CD8-positive, alpha-beta T cell (primary cell): ENCODE measurements at regions of chr7 and their contacts with region 1.

Region 1: DNA sequence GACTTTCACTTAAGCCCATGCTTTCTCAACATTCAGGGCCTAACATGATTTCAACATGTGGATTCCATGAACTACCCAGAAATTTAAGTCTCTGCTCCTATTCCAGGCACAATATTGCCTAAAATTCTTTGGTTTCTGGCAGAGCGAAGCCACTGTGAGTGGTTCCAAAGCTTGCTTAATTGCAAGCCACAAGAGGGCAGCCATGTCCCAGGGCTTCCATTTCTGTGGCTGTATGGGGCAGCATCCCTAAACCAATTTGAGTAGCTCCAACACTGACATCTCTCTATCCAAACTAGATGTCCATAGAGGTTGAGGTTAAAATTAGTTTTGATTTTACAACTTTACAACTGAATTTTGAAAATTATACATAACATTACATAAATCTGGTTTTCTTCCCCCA is 56.3 kb upstream of the MDFIC start:
- DNase-seq: peak; percentile 18 to 71 (median 53)
- ATAC-seq: peak; percentile 64
- H3K4me3 ChIP-seq: no peak overlapping the region
- H3K4me3 Mint-ChIP-seq: no peak overlapping the region
- H3K27ac ChIP-seq: no peak overlapping the region
- H3K27ac Mint-ChIP-seq: no peak overlapping the region
- H3K4me1 ChIP-seq: no peaks in the 10 kb centered on the region
- H3K4me1 Mint-ChIP-seq: no peaks in the 10 kb centered on the region
- H3K27me3 ChIP-seq: no peaks in the 10 kb centered on the region
- H3K27me3 Mint-ChIP-seq: no peaks in the 10 kb centered on the region
- CTCF ChIP-seq: peak; percentile 63

Region 2: GRCh38 chr7:113636727-113637421 is 1228.7 kb before region 1 on chr7:
- CTCF ChIA-PET with region 1: no interaction called
- POLR2A ChIA-PET with region 1: no interaction called
- intact Hi-C with region 1: no loop called
- DNase-seq: no peak
- ATAC-seq: no peak
- H3K4me3 ChIP-seq: no peak overlapping the region
- H3K4me3 Mint-ChIP-seq: no peak overlapping the region
- H3K27ac ChIP-seq: no peak overlapping the region
- H3K27ac Mint-ChIP-seq: no peak overlapping the region
- H3K4me1 ChIP-seq: no peaks in the 10 kb centered on the region
- H3K4me1 Mint-ChIP-seq: no peaks in the 10 kb centered on the region
- H3K27me3 ChIP-seq: no peaks in the 10 kb centered on the region
- H3K27me3 Mint-ChIP-seq: no peaks in the 10 kb centered on the region
- CTCF ChIP-seq: no peak

Region 3: DNA sequence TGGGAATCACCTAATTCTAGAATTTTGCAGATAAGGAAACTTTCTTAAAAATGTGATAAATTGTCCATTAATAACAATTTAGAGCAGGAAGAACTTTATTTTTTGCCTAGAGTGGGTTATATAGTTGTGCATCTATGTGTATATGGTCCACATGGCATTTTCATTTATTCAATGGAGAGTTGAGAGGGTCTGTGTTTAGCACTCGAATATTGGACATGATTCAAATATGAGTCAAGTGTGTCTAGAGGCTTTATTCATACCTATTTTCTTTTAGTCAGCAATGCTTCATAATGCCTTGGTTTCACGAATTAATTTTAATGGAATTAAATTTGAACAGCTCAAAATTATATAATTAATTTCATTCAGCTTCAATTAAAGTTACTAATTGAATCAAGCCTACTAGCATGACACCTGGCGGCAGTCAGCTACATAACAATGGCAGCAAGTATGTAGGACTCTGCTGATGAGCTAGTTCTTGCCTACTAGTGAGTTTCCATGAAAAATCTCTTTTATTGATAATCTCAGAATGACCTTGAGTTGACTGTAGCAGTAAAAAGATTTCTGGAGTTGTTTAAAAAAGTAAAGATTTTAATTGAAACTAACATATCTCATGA is 74.0 kb after region 1 on chr7:
- CTCF ChIA-PET with region 1: interaction called, 19 read pairs
- POLR2A ChIA-PET with region 1: no interaction called
- intact Hi-C with region 1: loop called (anchors 1 to 5 kb)
- DNase-seq: peak in 4 of 9 experiments; percentile 10 to 52 (median 31)
- ATAC-seq: peak; percentile 42
- H3K4me3 ChIP-seq: no peak overlapping the region
- H3K4me3 Mint-ChIP-seq: no peak overlapping the region
- H3K27ac ChIP-seq: no peak overlapping the region
- H3K27ac Mint-ChIP-seq: no peak overlapping the region
- H3K4me1 ChIP-seq: peaks cover 11% of the 10 kb centered on the region
- H3K4me1 Mint-ChIP-seq: peaks cover 60% of the 10 kb centered on the region
- H3K27me3 ChIP-seq: no peaks in the 10 kb centered on the region
- H3K27me3 Mint-ChIP-seq: no peaks in the 10 kb centered on the region
- CTCF ChIP-seq: no peak

Region 4: GRCh38 chr7:115217373-115217772 is 351.8 kb after region 1 on chr7:
- CTCF ChIA-PET with region 1: interaction called, 32 read pairs
- POLR2A ChIA-PET with region 1: interaction called, 3 read pairs
- intact Hi-C with region 1: loop called (anchors 1 to 2 kb)
- DNase-seq: peak in 1 of 9 experiments; percentile 17
- ATAC-seq: no peak
- H3K4me3 ChIP-seq: no peak overlapping the region
- H3K4me3 Mint-ChIP-seq: no peak overlapping the region
- H3K27ac ChIP-seq: no peak overlapping the region
- H3K27ac Mint-ChIP-seq: no peak overlapping the region
- H3K4me1 ChIP-seq: no peaks in the 10 kb centered on the region
- H3K4me1 Mint-ChIP-seq: peaks cover 4% of the 10 kb centered on the region
- H3K27me3 ChIP-seq: no peaks in the 10 kb centered on the region
- H3K27me3 Mint-ChIP-seq: no peaks in the 10 kb centered on the region
- CTCF ChIP-seq: peak; percentile 27

Region 5: DNA sequence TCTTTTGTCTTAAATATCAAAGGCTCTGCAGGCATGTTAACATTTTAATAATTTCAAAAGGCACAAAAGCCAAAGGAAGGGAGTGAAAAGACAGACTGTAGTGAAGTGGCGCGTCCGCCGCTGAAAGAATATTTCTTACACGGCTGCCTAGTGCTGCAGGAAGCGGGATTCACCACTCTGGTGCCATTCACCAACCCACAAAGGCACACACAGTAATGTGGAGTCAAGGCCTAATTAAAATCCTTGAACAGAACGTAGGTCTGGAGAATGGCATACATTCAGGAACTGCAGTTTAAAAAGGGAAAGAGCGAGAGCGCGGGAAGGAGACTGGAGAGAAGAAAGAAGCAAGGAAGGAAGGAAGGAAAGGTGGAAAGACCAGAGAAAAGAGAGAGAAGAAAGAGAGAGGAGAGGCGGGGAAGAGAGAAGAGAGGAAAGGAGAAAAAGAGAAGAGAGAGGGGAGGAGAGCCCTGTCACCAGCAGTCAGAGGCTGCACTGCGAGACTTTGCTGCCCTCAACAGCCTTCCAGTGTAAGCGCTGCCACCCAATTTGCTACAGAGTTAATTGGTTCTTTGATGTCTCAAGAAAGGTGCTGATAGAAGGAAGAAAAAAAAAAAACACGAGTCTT is 610.3 kb after region 1 on chr7:
- CTCF ChIA-PET with region 1: no interaction called
- POLR2A ChIA-PET with region 1: no interaction called
- intact Hi-C with region 1: loop called in 1 of 2 experiments (anchors 10 kb)
- DNase-seq: peak in 2 of 9 experiments; percentile 16 to 22
- ATAC-seq: no peak
- H3K4me3 ChIP-seq: no peak overlapping the region
- H3K4me3 Mint-ChIP-seq: peak overlapping the region; percentile 3
- H3K27ac ChIP-seq: no peak overlapping the region
- H3K27ac Mint-ChIP-seq: no peak overlapping the region
- H3K4me1 ChIP-seq: no peaks in the 10 kb centered on the region
- H3K4me1 Mint-ChIP-seq: peaks cover 10% of the 10 kb centered on the region
- H3K27me3 ChIP-seq: peaks cover 0 to 9% of the 10 kb centered on the region in 2 experiments
- H3K27me3 Mint-ChIP-seq: peaks cover 32% of the 10 kb centered on the region
- CTCF ChIP-seq: no peak

Region 6: GRCh38 chr7:115851291-115851690 is 985.7 kb after region 1 on chr7:
- CTCF ChIA-PET with region 1: interaction called, 5 read pairs
- POLR2A ChIA-PET with region 1: interaction called, 3 read pairs
- intact Hi-C with region 1: loop called in 1 of 2 experiments (anchors 5 kb)
- DNase-seq: peak in 2 of 9 experiments; percentile 31 to 34
- ATAC-seq: no peak
- H3K4me3 ChIP-seq: no peak overlapping the region
- H3K4me3 Mint-ChIP-seq: no peak overlapping the region
- H3K27ac ChIP-seq: no peak overlapping the region
- H3K27ac Mint-ChIP-seq: no peak overlapping the region
- H3K4me1 ChIP-seq: no peaks in the 10 kb centered on the region
- H3K4me1 Mint-ChIP-seq: no peaks in the 10 kb centered on the region
- H3K27me3 ChIP-seq: no peaks in the 10 kb centered on the region
- H3K27me3 Mint-ChIP-seq: no peaks in the 10 kb centered on the region
- CTCF ChIP-seq: no peak

Region 7: GRCh38 chr7:116122972-116123595 is 1257.5 kb after region 1 on chr7:
- CTCF ChIA-PET with region 1: no interaction called
- POLR2A ChIA-PET with region 1: no interaction called
- intact Hi-C with region 1: loop called (anchors 5 kb)
- DNase-seq: peak in 2 of 9 experiments; percentile 13 to 33
- ATAC-seq: no peak
- H3K4me3 ChIP-seq: no peak overlapping the region
- H3K4me3 Mint-ChIP-seq: no peak overlapping the region
- H3K27ac ChIP-seq: no peak overlapping the region
- H3K27ac Mint-ChIP-seq: no peak overlapping the region
- H3K4me1 ChIP-seq: no peaks in the 10 kb centered on the region
- H3K4me1 Mint-ChIP-seq: no peaks in the 10 kb centered on the region
- H3K27me3 ChIP-seq: peaks cover 0 to 2% of the 10 kb centered on the region in 2 experiments
- H3K27me3 Mint-ChIP-seq: peaks cover 18% of the 10 kb centered on the region
- CTCF ChIP-seq: peak; percentile 40